Dorsolateral prefrontal cortex (tissue), 120 donors: ENCODE measurements at regions of chr7 and their contacts with region 1.

Region 1: DNA sequence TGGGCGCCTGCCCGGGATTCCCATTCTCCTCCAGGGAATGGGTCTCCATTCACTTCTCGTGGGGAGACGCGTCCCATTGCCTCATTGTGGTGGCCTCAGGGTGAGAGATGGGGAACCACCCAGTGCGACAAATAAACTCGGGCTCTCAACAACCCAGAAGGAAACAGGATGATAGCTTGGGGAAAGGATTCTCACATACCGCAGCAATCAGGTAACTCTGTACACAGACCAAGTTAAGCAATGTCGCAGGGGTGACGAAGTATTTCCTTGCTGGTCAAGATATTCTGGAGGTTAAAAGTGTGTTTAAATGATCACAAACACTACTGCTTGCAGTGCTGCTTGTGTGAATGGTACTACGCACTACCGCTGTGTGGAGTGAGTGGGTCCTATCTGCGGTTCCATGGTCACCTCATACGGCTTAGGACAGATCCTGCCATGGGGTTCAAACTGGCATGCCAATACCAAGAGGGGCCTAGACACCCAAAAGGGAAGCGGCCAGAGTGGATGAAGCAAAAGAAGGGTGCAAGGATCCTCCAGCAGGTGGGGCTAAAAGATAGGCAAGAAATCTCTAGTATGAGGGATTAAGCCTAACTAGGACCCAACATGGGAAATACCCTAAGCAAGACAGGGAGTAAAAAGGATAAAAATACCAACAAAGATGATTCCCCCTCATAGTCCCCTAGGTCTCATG is 143.8 kb upstream of the TMEM106B start:
- DNase-seq: peak in 2 of 10 donors; percentile 12 to 27
- H3K4me3 ChIP-seq: no peak overlapping the region
- H3K27ac ChIP-seq: no peak overlapping the region
- H3K27me3 ChIP-seq: no peaks in the 10 kb centered on the region
- CTCF ChIP-seq: peak; percentile 22 to 75 (median 59)

Region 2: DNA sequence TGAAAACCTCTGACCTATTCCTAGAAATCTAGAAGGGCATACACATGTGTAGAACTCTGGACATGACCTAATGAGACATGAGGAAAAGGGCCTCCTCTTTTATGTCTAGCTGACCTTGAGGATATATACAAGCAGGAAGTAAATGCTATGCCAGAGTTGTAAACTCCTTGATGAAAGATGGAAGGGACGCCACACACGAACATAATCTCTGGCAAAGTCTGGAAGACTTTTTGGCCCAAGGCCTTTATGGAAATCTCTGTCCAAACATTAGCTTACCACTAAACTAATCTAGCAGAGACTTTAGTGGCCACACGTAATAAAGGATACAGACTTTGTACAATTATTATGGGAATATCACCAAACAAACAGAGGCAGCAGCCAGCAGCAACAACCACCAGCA is 97.2 kb before region 1 on chr7:
- intact Hi-C with region 1: no loop called
- DNase-seq: no peak
- H3K4me3 ChIP-seq: no peak overlapping the region
- H3K27ac ChIP-seq: no peak overlapping the region
- H3K27me3 ChIP-seq: no peaks in the 10 kb centered on the region
- CTCF ChIP-seq: no peak

Region 3: GRCh38 chr7:12119620-12120303 is 52.5 kb after region 1 on chr7:
- intact Hi-C with region 1: loop called in 1 of 2 experiments (anchors 5 kb)
- DNase-seq: no peak
- H3K4me3 ChIP-seq: no peak overlapping the region
- H3K27ac ChIP-seq: no peak overlapping the region
- H3K27me3 ChIP-seq: peaks cover 0 to 3% (median 0%) of the 10 kb centered on the region in 45 donors
- CTCF ChIP-seq: no peak

Region 4: DNA sequence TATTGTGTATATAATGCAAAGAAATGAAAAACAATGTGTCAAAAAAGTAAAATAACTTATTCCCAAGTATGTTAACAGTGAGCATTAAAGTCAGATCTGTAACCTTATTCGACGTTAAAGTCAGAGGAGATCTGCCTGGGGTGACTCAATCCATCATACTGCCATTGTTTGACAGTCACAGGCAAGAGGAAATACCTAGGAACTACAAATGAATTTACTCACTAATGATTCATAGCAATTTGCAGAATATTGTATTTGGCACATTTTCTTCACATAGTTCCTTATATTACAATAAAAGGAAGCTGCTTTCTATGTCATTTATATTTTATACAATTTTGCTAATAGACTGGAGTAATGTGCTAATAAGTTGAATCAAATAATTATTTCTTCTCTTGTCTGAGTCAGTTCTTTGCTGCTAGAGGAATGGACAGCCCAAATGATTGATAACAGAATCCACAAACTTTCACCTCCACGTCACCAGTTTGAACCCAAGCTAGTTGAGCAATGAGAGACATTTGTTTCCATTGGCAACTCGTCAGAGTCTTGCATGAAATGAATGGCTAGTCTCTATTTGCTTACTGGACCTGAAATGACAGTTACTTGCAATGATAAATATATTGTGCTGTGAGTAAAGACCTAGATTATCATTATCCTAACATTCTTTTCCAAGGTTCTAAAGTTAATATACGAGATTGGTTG is 95.3 kb after region 1 on chr7:
- intact Hi-C with region 1: no loop called
- DNase-seq: no peak
- H3K4me3 ChIP-seq: no peak overlapping the region
- H3K27ac ChIP-seq: no peak overlapping the region
- H3K27me3 ChIP-seq: no peaks in the 10 kb centered on the region
- CTCF ChIP-seq: no peak

Region 5: GRCh38 chr7:12322284-12322902 is 255.1 kb after region 1 on chr7:
- intact Hi-C with region 1: loop called (anchors 2 to 10 kb)
- DNase-seq: no peak
- H3K4me3 ChIP-seq: no peak overlapping the region
- H3K27ac ChIP-seq: no peak overlapping the region
- H3K27me3 ChIP-seq: no peaks in the 10 kb centered on the region
- CTCF ChIP-seq: peak; percentile 18 to 86 (median 70)

Region 6: DNA sequence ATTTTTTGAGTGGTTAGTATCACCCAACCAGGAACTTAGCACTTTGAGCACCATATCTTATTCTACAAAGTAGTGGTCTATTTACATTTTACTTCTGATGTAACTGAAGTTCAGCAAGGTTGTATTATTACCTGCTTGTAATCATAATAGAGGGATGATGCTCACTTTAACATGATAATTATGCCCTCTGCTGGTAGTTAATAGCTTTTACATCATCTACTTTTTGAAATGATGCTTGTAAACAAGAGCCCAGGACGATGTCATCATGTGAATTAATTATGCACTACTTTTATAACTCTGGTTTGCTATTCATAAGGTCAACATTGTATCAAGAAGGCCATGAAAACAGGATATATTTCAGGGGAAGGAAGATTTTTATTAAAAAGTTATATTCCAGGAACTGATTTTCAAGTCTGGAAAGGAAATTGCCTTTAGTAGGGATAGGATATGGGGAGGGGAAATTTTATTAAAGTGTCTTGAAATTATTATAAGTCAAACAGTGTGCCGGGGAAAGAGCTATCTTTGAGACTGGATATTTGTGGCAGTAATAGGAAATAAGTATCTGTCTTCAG is 422.9 kb after region 1 on chr7:
- intact Hi-C with region 1: loop called in 1 of 2 experiments (anchors 5 kb)
- DNase-seq: no peak
- H3K4me3 ChIP-seq: no peak overlapping the region
- H3K27ac ChIP-seq: no peak overlapping the region
- H3K27me3 ChIP-seq: peaks cover 0 to 4% (median 0%) of the 10 kb centered on the region in 45 donors
- CTCF ChIP-seq: peak; percentile 11 to 80 (median 56)